MCF 10A (cell line): ENCODE measurements at regions of chr3 and their contacts with region 1.

Region 1: DNA sequence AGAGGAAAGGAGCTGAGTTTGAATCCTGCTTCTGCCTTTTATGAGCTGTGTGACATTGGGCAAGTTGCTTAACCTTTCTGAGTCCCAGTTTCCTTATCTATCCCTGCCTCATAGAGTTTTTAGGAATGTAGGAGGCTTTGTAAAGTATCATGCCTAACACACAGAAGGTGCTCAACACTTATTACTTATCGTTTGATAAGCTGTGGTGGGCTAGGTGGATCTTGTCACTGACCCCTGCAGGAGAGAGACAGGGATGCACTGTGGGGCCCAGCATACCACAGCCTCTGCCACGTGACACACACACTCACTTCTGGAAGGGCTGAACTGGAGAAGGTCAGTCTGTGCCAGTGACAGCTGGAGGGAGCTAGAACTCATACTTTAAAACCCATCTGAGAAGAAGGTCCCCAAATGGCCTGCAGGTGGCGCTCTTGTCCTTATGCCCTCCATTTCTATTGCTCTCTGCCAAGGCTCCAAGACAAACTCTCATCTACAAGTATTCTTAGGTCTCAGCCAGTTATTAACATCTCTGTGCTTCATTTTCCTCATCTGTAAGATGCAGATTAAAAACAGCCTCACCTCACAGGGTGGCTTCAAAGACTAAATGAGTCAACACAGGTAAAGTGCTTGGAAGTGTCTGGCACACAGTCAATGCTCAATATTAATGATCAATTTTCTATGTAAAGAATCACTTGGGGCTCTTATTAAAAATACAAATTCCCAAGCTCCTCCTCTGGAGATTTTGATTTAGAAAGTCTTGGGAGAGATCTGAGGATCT is 57.5 kb upstream of the HACD2 start:
- DNase-seq: peak; percentile 89
- H3K4me3 Mint-ChIP-seq: no peak overlapping the region
- H3K27ac Mint-ChIP-seq: no peak overlapping the region
- H3K4me1 Mint-ChIP-seq: peaks cover 5% of the 10 kb centered on the region
- H3K27me3 Mint-ChIP-seq: no peaks in the 10 kb centered on the region
- CTCF ChIP-seq: no peak

Region 2: DNA sequence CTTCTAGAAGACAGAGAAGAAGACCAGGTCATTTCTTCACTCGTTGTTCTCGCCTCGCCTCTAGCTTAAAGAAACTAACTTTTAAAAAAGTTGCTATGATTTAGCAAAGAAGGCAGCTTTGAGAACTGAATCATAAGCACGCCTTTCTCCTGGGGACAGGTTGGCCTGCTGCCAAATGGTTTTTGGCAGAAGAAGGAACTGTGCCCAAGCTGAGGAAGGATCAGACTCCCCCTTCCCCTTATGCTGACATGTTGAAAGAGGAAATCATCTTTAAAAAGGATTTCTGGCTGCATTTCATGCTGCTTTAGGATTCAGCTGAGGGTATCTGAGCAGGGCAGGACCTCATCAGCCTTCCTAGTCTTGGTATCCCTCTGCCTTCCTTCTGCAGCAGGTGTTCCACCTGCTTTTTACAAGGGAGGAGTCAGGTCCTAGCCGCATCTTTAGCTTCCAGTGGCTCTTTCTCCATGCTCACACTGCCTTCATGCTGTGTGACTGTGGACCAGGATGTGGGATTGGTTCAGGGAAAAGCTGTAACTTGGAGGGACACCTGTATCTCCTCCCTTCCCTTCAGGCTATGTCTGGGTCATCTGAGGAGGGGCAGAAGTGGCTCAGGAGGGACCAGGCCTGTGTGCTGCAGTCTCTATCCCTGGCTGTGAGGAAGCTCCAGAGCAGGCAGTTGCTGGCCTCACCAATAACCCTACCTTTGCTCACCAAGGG is 23.4 kb before region 1 on chr3:
- CTCF ChIA-PET with region 1: interaction called, 19 read pairs
- POLR2A ChIA-PET with region 1: interaction called, 7 read pairs
- intact Hi-C with region 1: no loop called
- DNase-seq: peak; percentile 88
- H3K4me3 Mint-ChIP-seq: peak overlapping the region; percentile 60
- H3K27ac Mint-ChIP-seq: peak overlapping the region; percentile 40
- H3K4me1 Mint-ChIP-seq: peaks cover 31% of the 10 kb centered on the region
- H3K27me3 Mint-ChIP-seq: no peaks in the 10 kb centered on the region
- CTCF ChIP-seq: no peak

Region 3: GRCh38 chr3:123632161-123632655 is 10.2 kb before region 1 on chr3:
- CTCF ChIA-PET with region 1: interaction called, 13 read pairs
- POLR2A ChIA-PET with region 1: interaction called, 4 read pairs
- intact Hi-C with region 1: no loop called
- DNase-seq: no peak
- H3K4me3 Mint-ChIP-seq: no peak overlapping the region
- H3K27ac Mint-ChIP-seq: no peak overlapping the region
- H3K4me1 Mint-ChIP-seq: peaks cover 6% of the 10 kb centered on the region
- H3K27me3 Mint-ChIP-seq: no peaks in the 10 kb centered on the region
- CTCF ChIP-seq: no peak

Region 4: DNA sequence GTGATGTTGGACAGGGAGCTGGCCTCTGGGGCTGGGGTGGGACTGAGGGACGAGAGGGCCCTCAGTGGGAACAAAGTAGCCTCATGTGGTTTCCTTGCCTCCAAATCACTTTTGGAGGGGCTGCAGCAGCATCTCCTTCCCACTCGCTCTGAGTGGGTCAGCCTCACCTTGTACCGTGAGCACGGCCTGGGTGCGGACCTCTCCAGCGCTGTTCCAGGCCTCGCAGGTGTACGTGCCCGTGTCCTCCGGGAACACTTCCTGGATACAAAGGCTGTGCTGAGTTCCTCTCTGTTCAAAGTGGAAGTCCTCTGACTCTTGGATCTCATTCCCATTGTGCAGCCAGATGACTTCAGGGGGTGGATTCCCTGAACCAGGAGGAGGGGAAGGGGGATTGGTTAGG is 66.2 kb after region 1 on chr3:
- CTCF ChIA-PET with region 1: no interaction called
- POLR2A ChIA-PET with region 1: no interaction called
- intact Hi-C with region 1: no loop called
- DNase-seq: no peak
- H3K4me3 Mint-ChIP-seq: no peak overlapping the region
- H3K27ac Mint-ChIP-seq: no peak overlapping the region
- H3K4me1 Mint-ChIP-seq: no peaks in the 10 kb centered on the region
- H3K27me3 Mint-ChIP-seq: no peaks in the 10 kb centered on the region
- CTCF ChIP-seq: no peak